Sigmoid colon (tissue), 7 donors: ENCODE measurements at regions of chrX and their contacts with region 1.

Region 1: GRCh38 chrX:54439967-54440871 is at the start of gene TSR2:
- DNase-seq: peak; percentile 91
- H3K4me3 ChIP-seq: peak within 1 kb of the TSS; percentile 74 to 87 (median 82)
- H3K27ac ChIP-seq: peak within 1 kb of the TSS; percentile 49 to 78 (median 72)
- H3K4me1 ChIP-seq: peaks cover 0 to 12% (median 11%) of the 10 kb centered on the region in 4 donors
- H3K27me3 ChIP-seq: no peaks in the 10 kb centered on the region
- CTCF ChIP-seq: no peak
- EP300 ChIP-seq: no peak
- POLR2A ChIP-seq: peak in 1 of 2 donors; percentile 36
- total RNA-seq, gene TSR2: 20.2 to 29.3 (median 26.8) TPM

Region 2: GRCh38 chrX:54044126-54044876 is 395.9 kb before region 1 on chrX and contains the start of gene PHF8:
- intact Hi-C with region 1: loop called (anchors 5 kb)
- DNase-seq: peak; percentile 97
- H3K4me3 ChIP-seq: peak within 1 kb of the TSS; percentile 62 to 76 (median 68)
- H3K27ac ChIP-seq: peak within 1 kb of the TSS; percentile 91 to 95 (median 93)
- H3K4me1 ChIP-seq: no peaks in the 10 kb centered on the region
- H3K27me3 ChIP-seq: no peaks in the 10 kb centered on the region
- CTCF ChIP-seq: no peak
- EP300 ChIP-seq: no peak
- POLR2A ChIP-seq: peak; percentile 16 to 31
- total RNA-seq, gene PHF8: 15.3 to 44.9 (median 22.1) TPM

Region 3: DNA sequence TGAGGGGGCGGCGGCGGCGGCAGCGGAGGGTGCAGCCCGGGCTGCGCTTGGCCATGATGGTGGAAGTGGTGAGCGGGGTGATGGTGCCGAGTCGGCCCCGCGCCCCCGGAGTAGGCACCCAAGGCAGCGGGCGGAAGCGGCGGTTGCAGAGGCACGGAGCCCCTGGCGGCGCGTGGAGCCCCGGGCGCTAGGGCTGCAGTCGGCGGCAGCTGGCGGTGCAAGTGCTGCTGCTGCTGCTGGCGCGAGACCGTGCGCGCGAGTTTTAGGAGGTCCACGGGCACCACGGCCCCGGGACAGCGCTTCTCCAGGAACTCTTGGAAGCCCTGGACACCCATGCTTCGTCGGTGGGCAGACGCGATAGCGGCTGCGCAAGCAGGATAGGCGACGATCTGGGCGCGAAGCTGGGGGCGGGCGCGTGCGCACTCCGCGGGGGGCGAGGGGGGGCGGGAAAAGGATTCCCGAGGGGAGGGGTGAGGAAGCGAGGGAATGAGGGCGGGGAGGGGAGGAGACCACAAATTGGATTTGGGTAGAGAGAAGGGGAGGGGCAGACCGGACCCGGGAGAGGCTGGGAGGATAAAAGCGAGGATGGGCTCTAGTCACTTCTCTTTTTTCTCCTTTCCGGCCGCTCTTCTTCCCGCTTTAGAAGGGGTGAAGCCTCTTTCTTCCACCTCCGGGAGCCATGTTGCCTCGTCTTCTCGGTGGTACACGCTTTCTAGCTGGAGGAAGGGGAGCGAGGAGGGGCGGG is 257.2 kb before region 1 on chrX and contains the start of gene FAM120C:
- intact Hi-C with region 1: loop called (anchors 2 kb)
- DNase-seq: peak; percentile 84
- H3K4me3 ChIP-seq: peak within 1 kb of the TSS; percentile 61 to 93 (median 78)
- H3K27ac ChIP-seq: peak within 1 kb of the TSS; percentile 88 to 94 (median 92)
- H3K4me1 ChIP-seq: peaks cover 0 to 33% (median 10%) of the 10 kb centered on the region in 4 donors
- H3K27me3 ChIP-seq: no peaks in the 10 kb centered on the region
- CTCF ChIP-seq: no peak
- EP300 ChIP-seq: no peak
- POLR2A ChIP-seq: no peak
- total RNA-seq, gene FAM120C: 4.4 to 7.7 (median 6.0) TPM

Region 4: GRCh38 chrX:54357414-54358377 is 82.5 kb before region 1 on chrX and contains the start of gene WNK3:
- intact Hi-C with region 1: loop called (anchors 5 kb)
- DNase-seq: peak; percentile 92
- H3K4me3 ChIP-seq: peak within 1 kb of the TSS; percentile 34 to 55 (median 52)
- H3K27ac ChIP-seq: peak within 1 kb of the TSS; percentile 68 to 78 (median 70)
- H3K4me1 ChIP-seq: peaks cover 0 to 4% (median 0%) of the 10 kb centered on the region in 4 donors
- H3K27me3 ChIP-seq: no peaks in the 10 kb centered on the region
- CTCF ChIP-seq: no peak
- EP300 ChIP-seq: no peak
- POLR2A ChIP-seq: no peak
- total RNA-seq, gene WNK3: 1.6 to 1.9 (median 1.7) TPM

Region 5: DNA sequence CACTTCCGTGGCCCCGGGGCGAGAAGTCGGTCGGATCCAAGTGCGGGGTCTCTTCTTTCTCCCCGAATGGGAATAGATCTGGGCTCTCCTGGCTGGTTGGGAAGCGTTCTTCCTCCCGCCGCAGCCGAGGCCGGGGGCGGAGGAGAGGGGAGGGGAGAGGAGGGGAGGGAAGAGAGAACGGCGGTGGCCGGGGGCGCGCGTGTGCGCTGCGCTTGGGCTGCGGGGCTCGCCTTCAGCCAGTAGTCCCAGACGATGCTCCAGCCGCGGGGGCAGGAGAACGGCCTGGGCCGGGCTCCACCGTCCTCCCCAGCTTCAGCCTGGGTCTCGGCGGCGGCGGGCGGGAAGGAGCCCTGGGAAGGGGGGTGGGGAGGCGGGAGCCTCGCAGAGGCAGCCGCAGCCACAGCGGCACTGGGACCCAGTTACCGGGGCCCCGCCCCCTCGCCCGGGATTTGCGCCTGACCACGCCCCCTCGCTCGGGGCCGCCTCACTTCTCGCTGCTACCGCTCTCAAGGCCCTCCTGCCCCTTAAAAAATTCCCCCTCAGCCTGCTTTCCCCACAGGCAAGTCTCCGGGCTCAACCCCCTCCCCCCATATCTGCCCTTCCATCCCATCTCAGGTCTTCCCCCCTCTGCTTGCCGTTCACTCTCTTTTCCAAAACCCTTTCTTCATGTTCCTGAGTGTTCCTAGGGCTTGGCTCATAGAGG is 55.7 kb after region 1 on chrX and contains the start of gene FGD1:
- intact Hi-C with region 1: loop called (anchors 5 kb)
- DNase-seq: peak; percentile 85
- H3K4me3 ChIP-seq: peak within 1 kb of the TSS; percentile 53 to 66 (median 62)
- H3K27ac ChIP-seq: peak within 1 kb of the TSS; percentile 78 to 85 (median 83)
- H3K4me1 ChIP-seq: peaks cover 0 to 25% (median 14%) of the 10 kb centered on the region in 4 donors
- H3K27me3 ChIP-seq: no peaks in the 10 kb centered on the region
- CTCF ChIP-seq: no peak
- EP300 ChIP-seq: no peak
- POLR2A ChIP-seq: no peak
- total RNA-seq, gene FGD1: 3.2 to 9.7 (median 4.0) TPM

Region 6: DNA sequence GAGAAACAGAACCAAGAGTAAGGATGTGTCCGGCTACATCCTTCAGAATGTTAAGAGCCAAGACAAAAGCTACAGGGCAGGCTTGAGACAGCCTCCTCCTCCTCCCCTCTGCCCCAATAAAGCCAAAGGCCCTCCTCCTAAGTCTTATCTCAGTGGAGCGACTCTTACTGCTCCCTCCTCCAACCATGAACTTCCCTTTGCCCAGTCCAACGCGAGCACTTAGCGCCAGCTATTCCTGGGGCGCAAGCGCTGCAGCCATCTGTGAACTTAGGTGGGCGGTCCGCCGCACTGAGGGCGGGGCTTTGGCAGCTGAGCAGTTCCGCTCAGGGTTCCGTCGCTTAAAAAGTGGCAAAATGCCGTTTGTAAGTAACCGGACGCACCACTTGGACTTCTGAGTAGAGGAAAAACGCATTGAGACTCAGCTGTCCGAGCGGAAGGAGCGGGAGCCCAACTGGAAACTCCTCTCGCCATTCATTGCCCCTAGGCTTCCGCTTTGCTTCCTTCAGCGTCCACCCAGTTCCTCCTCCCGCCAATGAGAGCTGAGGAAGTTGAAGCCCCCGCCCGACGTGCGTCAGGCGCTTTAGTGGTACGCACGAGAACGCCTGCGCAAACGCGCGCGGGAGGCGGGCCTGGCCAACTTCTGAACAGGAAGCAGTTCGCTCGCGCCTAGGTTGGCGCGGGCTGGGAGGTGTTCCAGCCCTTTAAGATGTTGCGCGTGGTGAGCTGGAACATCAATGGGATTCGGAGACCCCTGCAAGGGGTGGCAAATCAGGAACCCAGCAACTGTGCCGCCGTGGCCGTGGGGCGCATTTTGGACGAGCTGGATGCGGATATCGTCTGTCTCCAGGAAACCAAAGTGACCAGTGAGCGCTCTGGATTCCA is 559.7 kb after region 1 on chrX and contains the start of gene APEX2:
- intact Hi-C with region 1: loop called (anchors 10 kb)
- DNase-seq: peak; percentile 96
- H3K4me3 ChIP-seq: peak within 1 kb of the TSS; percentile 34 to 58 (median 55)
- H3K27ac ChIP-seq: peak within 1 kb of the TSS; percentile 83 to 87 (median 84)
- H3K4me1 ChIP-seq: peaks cover 0 to 15% (median 6%) of the 10 kb centered on the region in 4 donors
- H3K27me3 ChIP-seq: no peaks in the 10 kb centered on the region
- CTCF ChIP-seq: no peak
- EP300 ChIP-seq: no peak
- POLR2A ChIP-seq: peak; percentile 66 to 77
- total RNA-seq, gene APEX2: 3.9 to 5.7 (median 4.6) TPM

Region 7: DNA sequence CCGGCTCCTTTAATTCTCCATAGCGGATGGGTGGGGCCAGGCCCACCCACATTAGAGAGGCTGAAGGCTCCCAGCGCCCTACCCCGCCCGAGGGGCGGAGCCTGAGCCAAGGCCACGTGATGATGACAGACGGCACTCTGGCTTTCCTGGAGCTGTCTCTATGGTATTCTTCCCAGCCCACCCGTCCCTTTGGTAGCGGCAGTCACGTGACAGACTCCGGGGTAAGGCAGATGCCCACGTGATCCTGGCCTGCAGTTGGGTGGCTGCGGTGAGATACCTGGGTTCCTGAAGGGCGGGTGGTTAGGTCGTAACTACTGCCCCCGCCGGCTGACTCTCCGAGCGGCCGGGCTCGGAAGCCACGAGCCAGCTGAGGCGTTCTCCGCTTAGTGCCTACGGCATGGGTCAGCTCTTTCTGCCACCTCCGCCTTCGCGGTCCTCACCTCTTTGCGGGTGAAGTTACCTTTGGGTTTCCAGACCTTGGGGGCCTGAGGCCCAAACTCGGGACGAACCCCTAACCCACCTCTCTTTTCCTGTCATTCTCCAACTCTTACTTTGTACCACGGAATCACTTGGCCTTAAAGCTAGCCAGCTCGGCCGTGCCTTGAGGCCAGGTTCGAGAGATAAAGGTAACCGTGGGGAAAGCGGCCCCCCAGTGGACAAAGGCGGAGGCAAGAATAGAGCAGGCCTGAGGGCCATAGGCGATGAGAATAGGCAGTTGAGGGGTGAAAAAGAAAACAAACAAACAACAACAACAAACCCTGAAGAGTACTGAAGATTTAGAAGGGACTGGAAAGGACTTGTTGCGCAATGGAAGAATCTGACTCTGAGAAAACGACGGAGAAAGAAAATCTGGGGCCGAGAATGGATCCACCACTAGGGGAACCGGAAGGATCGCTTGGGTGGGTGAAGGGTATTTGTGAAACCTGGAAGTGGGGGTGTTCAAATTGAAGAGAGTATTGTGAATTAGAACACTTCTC is 1277.6 kb after region 1 on chrX and contains the start of gene RRAGB:
- intact Hi-C with region 1: loop called (anchors 10 kb)
- DNase-seq: peak; percentile 97
- H3K4me3 ChIP-seq: peak within 1 kb of the TSS; percentile 49 to 67 (median 62)
- H3K27ac ChIP-seq: peak within 1 kb of the TSS; percentile 81 to 87 (median 84)
- H3K4me1 ChIP-seq: peaks cover 0 to 12% (median 0%) of the 10 kb centered on the region in 4 donors
- H3K27me3 ChIP-seq: no peaks in the 10 kb centered on the region
- CTCF ChIP-seq: peak in 3 of 4 experiments; percentile 45 to 57 (median 47)
- EP300 ChIP-seq: peak in 1 of 4 donors; percentile 26
- POLR2A ChIP-seq: no peak
- total RNA-seq, gene RRAGB: 10.0 to 41.4 (median 24.4) TPM